ENCODE measurements at regions of chr3 and their contacts with region 1.

Region 1: GRCh38 chr3:94249585-94249984 is 186.7 kb downstream of the NSUN3 start:
- DNase-seq: peak; percentile 83
- ATAC-seq: peak; percentile 69
- H3K4me3 Mint-ChIP-seq: no peak overlapping the region
- H3K27ac Mint-ChIP-seq: no peak overlapping the region
- H3K4me1 Mint-ChIP-seq: peaks cover 55% of the 10 kb centered on the region
- H3K27me3 Mint-ChIP-seq: no peaks in the 10 kb centered on the region
- CTCF ChIP-seq: peak; percentile 90

Region 2: DNA sequence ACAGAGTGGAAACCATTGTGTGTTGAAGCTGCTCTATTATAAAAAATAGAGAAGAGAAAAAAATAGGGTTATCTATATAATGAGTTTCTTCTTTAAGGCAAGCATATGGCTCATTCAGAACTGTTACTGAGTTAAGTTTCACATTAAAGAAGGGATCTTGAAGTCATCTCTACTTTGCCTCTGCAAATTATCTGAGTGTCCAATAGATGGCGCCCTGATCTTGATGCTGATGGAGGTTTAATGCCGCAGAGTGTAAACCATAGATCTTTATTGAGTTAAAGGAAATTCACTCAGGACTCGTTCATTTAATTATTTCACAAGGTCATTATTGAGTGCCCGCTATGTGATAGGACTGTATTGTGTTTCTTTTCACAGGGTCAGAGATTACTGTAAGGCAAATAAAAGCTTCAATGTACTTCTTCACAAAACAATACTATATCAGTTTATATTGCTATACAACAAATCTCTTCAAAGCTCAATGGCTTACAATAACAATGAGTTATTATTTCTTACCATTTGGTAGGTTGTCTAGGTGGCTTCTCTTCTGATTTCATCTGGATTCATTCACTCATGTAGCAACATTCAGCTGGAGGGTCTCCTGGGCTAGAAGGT is 15.3 kb before region 1 on chr3:
- CTCF ChIA-PET with region 1: interaction called, 11 read pairs
- POLR2A ChIA-PET with region 1: no interaction called
- DNase-seq: peak; percentile 14
- ATAC-seq: peak; percentile 76
- H3K4me3 Mint-ChIP-seq: no peak overlapping the region
- H3K27ac Mint-ChIP-seq: no peak overlapping the region
- H3K4me1 Mint-ChIP-seq: no peaks in the 10 kb centered on the region
- H3K27me3 Mint-ChIP-seq: no peaks in the 10 kb centered on the region
- CTCF ChIP-seq: peak; percentile 38; the same call in 1 of the 2 replicates

Region 3: GRCh38 chr3:94285870-94286269 is 36.3 kb after region 1 on chr3:
- CTCF ChIA-PET with region 1: interaction called, 12 read pairs
- POLR2A ChIA-PET with region 1: no interaction called
- DNase-seq: no peak
- ATAC-seq: 0 out of 2 replicates have a peak, but pooled peaks have one; percentile 24
- H3K4me3 Mint-ChIP-seq: no peak overlapping the region
- H3K27ac Mint-ChIP-seq: no peak overlapping the region
- H3K4me1 Mint-ChIP-seq: peaks cover 6% of the 10 kb centered on the region
- H3K27me3 Mint-ChIP-seq: peaks cover 47% of the 10 kb centered on the region
- CTCF ChIP-seq: no peak

Region 4: GRCh38 chr3:94303897-94304296 is 54.3 kb after region 1 on chr3:
- CTCF ChIA-PET with region 1: interaction called, 13 read pairs
- POLR2A ChIA-PET with region 1: no interaction called
- DNase-seq: peak; percentile 11
- ATAC-seq: peak; percentile 58; the same call in 1 of the 2 replicates
- H3K4me3 Mint-ChIP-seq: no peak overlapping the region
- H3K27ac Mint-ChIP-seq: no peak overlapping the region
- H3K4me1 Mint-ChIP-seq: peaks cover 23% of the 10 kb centered on the region
- H3K27me3 Mint-ChIP-seq: no peaks in the 10 kb centered on the region; the same call in 1 of the 2 replicates
- CTCF ChIP-seq: no peak

Region 5: GRCh38 chr3:94349310-94349878 is 99.8 kb after region 1 on chr3:
- CTCF ChIA-PET with region 1: interaction called, 11 read pairs
- POLR2A ChIA-PET with region 1: no interaction called
- DNase-seq: no peak
- ATAC-seq: peak; percentile 93
- H3K4me3 Mint-ChIP-seq: no peak overlapping the region
- H3K27ac Mint-ChIP-seq: no peak overlapping the region
- H3K4me1 Mint-ChIP-seq: peaks cover 43% of the 10 kb centered on the region
- H3K27me3 Mint-ChIP-seq: no peaks in the 10 kb centered on the region; the same call in 1 of the 2 replicates
- CTCF ChIP-seq: no peak

Region 6: GRCh38 chr3:94440767-94441493 is 191.3 kb after region 1 on chr3:
- CTCF ChIA-PET with region 1: no interaction called
- POLR2A ChIA-PET with region 1: no interaction called
- DNase-seq: no peak
- ATAC-seq: no peak
- H3K4me3 Mint-ChIP-seq: no peak overlapping the region
- H3K27ac Mint-ChIP-seq: no peak overlapping the region
- H3K4me1 Mint-ChIP-seq: 0 out of 2 replicates have a peak, but pooled peaks cover 4% of the 10 kb centered on the region
- H3K27me3 Mint-ChIP-seq: no peaks in the 10 kb centered on the region
- CTCF ChIP-seq: no peak

Measured in WTC11 (cell line).